H1 (cell line): ENCODE measurements at regions of chr22 and their contacts with region 1.

Region 1: DNA sequence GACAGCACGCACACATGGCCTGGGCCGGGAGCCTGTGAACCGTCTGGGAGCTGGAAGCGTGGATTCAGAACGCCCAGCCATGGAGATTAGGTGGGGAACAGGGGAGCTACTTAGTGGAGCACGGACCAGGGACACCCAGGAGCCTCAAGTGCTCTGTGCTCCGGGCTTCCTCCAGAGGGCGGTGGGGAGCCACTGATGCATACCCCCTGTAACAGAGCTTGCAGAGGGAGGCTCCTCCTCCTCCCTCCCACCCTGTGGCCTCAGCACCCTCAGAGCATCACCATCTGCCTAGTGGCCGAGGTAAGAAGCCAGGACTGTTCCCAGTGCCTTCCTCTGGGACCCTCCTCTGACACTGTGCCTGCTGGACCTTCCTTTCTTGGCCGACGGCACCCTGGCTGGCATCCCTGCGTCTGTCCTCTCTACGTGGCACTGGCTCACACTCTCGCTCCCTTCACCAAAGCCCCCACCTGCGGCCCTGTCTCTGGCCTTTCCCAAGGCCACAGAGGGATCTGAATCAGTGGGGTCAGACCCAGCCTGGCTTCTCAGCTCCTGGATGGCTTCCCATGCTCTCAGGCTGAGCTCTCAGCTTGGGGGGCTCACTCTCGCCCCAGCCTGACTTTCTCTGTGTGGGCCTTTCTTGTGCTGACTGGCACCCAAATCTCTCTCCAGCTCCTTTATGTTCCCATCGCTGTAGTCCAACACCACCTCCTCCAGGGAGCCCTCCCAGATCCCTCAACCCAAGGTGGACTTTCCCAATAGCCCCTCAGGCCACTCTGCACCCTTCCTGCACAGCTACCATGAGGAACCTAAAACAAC is 780.9 kb downstream of the BRD1 start:
- DNase-seq: peak; percentile 81 to 89
- H3K4me3 ChIP-seq: no peak overlapping the region
- H3K27ac ChIP-seq: no peak overlapping the region
- H3K4me1 ChIP-seq: no peaks in the 10 kb centered on the region; a peak in 1 of 7 replicates
- H3K27me3 ChIP-seq: no peaks in the 10 kb centered on the region; a peak in 2 of 7 replicates
- CTCF ChIP-seq: peak; percentile 89 to 96 (median 92)
- EP300 ChIP-seq: no peak
- POLR2A ChIP-seq: no peak
- RAD21 ChIP-seq: peak; percentile 96 to 98

Region 2: DNA sequence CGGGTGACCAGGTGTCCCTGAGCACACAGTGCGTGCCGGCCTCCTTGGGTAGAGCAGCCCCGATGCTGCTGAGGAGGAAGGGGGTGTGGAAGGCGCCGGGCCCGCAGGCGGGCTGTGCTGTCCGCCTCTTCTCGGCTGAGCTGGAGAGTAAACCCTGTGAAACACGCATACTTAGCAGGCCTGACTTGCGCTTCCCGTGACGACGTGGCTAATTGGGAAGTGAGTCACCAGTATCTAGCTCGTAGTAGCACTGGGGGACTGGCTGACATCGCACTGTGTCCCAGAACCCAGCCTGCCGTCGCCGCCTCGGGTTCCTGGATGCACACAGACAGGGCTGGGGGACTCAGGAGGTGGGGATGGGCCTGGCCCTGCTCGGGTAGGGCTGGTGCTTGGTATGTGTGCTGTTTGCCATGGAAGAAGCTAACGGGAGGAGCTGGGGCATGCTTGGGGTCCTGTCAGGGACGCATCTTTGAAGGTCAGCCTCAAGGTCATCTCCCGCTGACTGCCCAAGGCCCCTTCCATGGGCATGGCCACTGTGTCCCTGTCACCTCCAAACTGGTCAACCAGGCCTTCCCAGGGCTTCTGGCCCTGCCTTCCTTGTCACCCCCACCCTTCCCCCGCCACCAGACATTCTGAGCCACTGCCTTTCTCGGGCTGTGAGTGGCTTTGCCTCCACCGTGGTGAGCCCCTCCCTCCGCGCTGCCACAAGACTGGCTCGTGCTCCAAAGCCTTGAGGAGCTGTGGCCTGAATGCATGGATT is 546.1 kb before region 1 on chr22:
- CTCF ChIA-PET with region 1: no interaction called
- POLR2A ChIA-PET with region 1: no interaction called
- DNase-seq: no peak
- H3K4me3 ChIP-seq: no peak overlapping the region
- H3K27ac ChIP-seq: no peak overlapping the region
- H3K4me1 ChIP-seq: peaks cover 0 to 32% (median 17%) of the 10 kb centered on the region in 4 experiments; a peak in 4 of 7 replicates
- H3K27me3 ChIP-seq: no peaks in the 10 kb centered on the region
- CTCF ChIP-seq: no peak
- EP300 ChIP-seq: no peak
- POLR2A ChIP-seq: no peak
- RAD21 ChIP-seq: no peak

Region 3: GRCh38 chr22:49018601-49019000 is 28.2 kb before region 1 on chr22:
- CTCF ChIA-PET with region 1: no interaction called
- POLR2A ChIA-PET with region 1: no interaction called
- DNase-seq: peak in 1 of 2 experiments; percentile 30
- H3K4me3 ChIP-seq: no peak overlapping the region
- H3K27ac ChIP-seq: no peak overlapping the region
- H3K4me1 ChIP-seq: no peaks in the 10 kb centered on the region; a peak in 1 of 7 replicates
- H3K27me3 ChIP-seq: no peaks in the 10 kb centered on the region
- CTCF ChIP-seq: no peak
- EP300 ChIP-seq: no peak
- POLR2A ChIP-seq: no peak
- RAD21 ChIP-seq: no peak

Region 4: GRCh38 chr22:49035818-49036457 is 10.8 kb before region 1 on chr22:
- CTCF ChIA-PET with region 1: interaction called, 17 read pairs
- POLR2A ChIA-PET with region 1: no interaction called
- DNase-seq: no peak
- H3K4me3 ChIP-seq: no peak overlapping the region
- H3K27ac ChIP-seq: no peak overlapping the region
- H3K4me1 ChIP-seq: no peaks in the 10 kb centered on the region; a peak in 1 of 7 replicates
- H3K27me3 ChIP-seq: peaks cover 0 to 2% (median 0%) of the 10 kb centered on the region in 4 experiments; a peak in 2 of 7 replicates
- CTCF ChIP-seq: no peak
- EP300 ChIP-seq: no peak
- POLR2A ChIP-seq: no peak
- RAD21 ChIP-seq: no peak

Region 5: DNA sequence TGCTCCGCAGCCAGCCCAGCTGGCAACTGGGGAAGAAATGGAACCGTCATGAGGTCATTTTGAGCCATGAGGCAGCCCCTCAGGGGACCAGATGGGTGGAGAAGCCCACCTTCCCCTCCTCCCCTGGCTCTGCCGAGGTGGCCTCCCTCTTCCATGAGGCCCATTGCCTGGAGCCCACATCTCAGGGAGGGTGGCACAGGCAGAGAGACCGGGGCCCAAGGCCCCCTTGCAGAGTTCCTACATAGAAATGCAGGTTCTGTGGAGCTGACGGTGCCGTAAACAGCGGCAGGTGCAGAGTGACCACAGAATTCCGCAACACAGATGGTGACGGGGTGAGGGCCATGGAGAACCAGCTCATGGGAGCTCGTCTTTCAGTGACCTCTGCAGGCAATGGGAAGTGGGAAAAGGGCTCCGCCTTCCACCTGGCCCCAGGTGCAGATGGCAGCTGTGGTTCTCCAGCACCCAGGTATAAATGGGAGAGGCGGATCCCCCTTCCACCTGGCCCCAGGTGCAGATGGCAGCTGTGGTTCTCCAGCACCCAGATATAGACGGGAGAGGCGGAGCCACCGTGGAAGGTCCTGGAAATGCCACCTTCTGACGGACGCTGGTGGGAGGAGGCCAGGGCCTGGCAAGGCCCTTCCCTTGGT is 15.5 kb after region 1 on chr22:
- CTCF ChIA-PET with region 1: interaction called, 34 read pairs
- POLR2A ChIA-PET with region 1: no interaction called
- DNase-seq: no peak
- H3K4me3 ChIP-seq: no peak overlapping the region
- H3K27ac ChIP-seq: no peak overlapping the region
- H3K4me1 ChIP-seq: peaks cover 0 to 18% (median 1%) of the 10 kb centered on the region in 4 experiments; a peak in 3 of 7 replicates
- H3K27me3 ChIP-seq: no peaks in the 10 kb centered on the region
- CTCF ChIP-seq: no peak
- EP300 ChIP-seq: no peak
- POLR2A ChIP-seq: no peak
- RAD21 ChIP-seq: no peak

Region 6: DNA sequence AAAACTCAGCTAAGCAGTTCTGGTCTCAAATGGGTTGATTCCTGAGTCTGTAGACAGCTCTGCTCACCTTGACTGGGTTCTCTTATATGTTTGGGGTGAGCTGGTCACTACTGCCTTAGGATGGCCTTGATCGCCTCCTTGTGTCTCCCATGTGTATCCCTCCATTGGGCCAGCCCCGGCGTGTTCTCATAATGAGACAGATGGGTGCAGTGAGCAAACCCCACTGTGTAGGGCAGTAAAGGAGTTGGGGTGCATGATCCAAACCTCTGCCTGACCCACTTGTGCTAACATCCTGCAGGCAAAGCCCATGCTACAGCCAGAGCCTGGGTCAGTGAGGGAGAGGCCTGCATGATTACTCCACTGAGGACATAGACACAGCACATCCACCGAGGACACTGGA is 123.3 kb after region 1 on chr22:
- CTCF ChIA-PET with region 1: interaction called, 28 read pairs
- POLR2A ChIA-PET with region 1: no interaction called
- DNase-seq: no peak
- H3K4me3 ChIP-seq: no peak overlapping the region
- H3K27ac ChIP-seq: no peak overlapping the region
- H3K4me1 ChIP-seq: no peaks in the 10 kb centered on the region
- H3K27me3 ChIP-seq: no peaks in the 10 kb centered on the region; a peak in 1 of 7 replicates
- CTCF ChIP-seq: peak; percentile 48 to 59 (median 55)
- EP300 ChIP-seq: no peak
- POLR2A ChIP-seq: no peak
- RAD21 ChIP-seq: peak; percentile 72 to 82

Region 7: DNA sequence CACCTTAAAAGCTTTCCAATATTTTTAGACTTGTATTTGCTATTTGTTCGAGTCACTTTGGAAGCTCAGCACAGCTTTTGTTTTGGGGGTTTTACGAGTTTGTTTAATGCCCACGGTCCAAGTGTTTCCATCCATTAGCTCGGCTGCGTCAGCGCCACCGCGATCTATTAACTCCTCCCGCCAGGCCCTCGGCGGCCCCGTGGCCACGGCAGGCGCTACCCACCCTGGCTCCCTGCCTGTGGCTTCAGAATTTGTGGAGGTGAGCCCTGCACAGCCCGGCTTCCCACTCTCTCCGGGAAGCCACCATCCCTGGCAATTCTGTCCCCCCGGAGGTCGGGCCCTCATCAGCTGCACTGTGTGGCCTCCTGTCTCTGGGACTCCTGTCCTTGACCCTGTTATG is 132.4 kb after region 1 on chr22:
- CTCF ChIA-PET with region 1: interaction called, 13 read pairs
- POLR2A ChIA-PET with region 1: no interaction called
- DNase-seq: no peak
- H3K4me3 ChIP-seq: no peak overlapping the region
- H3K27ac ChIP-seq: no peak overlapping the region
- H3K4me1 ChIP-seq: no peaks in the 10 kb centered on the region; a peak in 1 of 7 replicates
- H3K27me3 ChIP-seq: no peaks in the 10 kb centered on the region; a peak in 1 of 7 replicates
- CTCF ChIP-seq: no peak
- EP300 ChIP-seq: no peak
- POLR2A ChIP-seq: no peak
- RAD21 ChIP-seq: no peak

Region 8: DNA sequence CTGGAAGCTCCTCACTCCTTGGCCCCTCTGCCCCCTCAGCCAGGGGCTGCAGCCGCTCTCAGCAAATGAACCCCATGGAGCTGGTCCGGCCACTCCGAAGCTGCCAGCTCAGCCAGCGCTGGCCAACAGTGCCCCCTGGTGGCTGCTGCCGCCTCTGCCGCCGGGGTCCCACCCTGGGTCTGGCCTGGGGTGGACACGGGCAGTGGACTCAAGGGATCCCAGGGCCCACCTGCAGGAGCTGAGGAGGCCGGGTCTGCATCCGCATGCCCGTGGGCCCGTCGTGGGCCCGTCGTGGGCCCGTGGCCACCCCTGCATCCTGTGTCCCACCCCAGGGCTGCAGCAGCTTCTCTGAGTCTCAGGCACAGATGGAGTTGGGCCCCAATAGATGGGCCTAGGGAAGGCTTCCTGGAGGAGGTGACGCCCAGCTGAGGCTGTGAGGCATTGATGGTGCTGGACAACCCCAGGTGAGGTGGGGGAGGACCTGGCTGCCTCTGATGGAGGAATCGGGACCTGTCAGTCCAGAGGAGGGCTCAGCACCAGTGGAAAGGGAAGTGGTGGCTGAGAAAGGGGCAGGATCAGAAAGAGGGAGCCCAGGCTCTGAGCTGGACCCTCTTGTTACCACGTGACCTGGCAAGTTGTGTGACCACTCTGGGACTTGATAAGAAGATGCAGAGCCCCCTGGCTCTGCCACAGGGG is 258.6 kb after region 1 on chr22:
- CTCF ChIA-PET with region 1: interaction called, 95 read pairs
- POLR2A ChIA-PET with region 1: no interaction called
- DNase-seq: peak; percentile 38 to 100
- H3K4me3 ChIP-seq: no peak overlapping the region
- H3K27ac ChIP-seq: no peak overlapping the region
- H3K4me1 ChIP-seq: peaks cover 0 to 4% (median 2%) of the 10 kb centered on the region in 4 experiments; a peak in 4 of 7 replicates
- H3K27me3 ChIP-seq: no peaks in the 10 kb centered on the region; a peak in 1 of 7 replicates
- CTCF ChIP-seq: peak; percentile 90 to 96 (median 94)
- EP300 ChIP-seq: peak in 1 of 2 experiments; percentile 74; a peak in 1 of 3 replicates
- POLR2A ChIP-seq: no peak
- RAD21 ChIP-seq: peak; percentile 99

Region 9: DNA sequence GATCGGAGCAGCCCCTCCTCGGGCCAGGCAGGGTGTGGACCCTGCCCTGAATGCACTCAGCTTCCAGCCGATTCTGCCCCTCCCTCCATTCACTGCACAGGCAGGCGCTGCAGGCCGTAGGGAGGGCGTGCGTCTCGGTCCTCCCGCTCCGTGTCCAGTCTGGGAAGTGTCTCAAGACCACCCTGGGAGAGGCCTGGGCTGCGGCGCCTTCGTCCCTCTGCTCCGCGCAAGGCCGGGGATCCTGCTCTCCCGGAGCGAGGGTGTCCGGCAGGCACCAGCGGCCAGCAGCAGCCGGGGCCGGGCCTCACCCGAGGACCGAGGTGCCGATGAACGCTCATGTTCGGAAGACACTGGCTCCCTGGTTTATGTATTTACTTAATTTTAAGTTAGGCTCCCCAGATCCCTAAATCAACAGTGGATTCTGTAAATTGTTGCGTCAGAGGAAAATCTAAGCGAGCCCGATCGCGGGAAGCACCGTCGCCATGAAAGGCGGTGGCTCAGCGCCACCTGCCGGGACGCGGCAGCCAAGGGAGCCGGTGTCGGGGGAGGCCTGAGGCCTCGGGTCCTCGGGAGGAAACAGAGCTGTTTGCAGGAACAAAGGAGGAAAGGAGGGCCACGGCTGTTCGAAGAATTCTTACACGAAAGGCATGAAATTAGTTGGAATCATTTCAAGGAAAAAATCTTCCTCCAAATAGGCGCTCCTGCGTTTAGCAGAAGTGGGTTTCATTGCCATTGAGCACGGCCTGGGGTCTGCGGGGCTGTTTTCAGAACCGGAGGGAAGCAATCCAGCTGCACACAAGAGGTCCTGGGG is 585.6 kb after region 1 on chr22:
- CTCF ChIA-PET with region 1: interaction called, 14 read pairs
- POLR2A ChIA-PET with region 1: no interaction called
- DNase-seq: peak; percentile 39 to 84
- H3K4me3 ChIP-seq: peak overlapping the region; percentile 32 to 61 (median 48)
- H3K27ac ChIP-seq: no peak overlapping the region
- H3K4me1 ChIP-seq: peaks cover 0 to 6% (median 4%) of the 10 kb centered on the region in 4 experiments; a peak in 4 of 7 replicates
- H3K27me3 ChIP-seq: peaks cover 0 to 4% (median 2%) of the 10 kb centered on the region in 4 experiments; a peak in 3 of 7 replicates
- CTCF ChIP-seq: peak; percentile 78 to 90 (median 83)
- EP300 ChIP-seq: no peak
- POLR2A ChIP-seq: no peak
- RAD21 ChIP-seq: peak; percentile 95 to 97